Heart right ventricle (tissue), 16 donors: ENCODE measurements at regions of chr15 and their contacts with region 1.

Region 1: DNA sequence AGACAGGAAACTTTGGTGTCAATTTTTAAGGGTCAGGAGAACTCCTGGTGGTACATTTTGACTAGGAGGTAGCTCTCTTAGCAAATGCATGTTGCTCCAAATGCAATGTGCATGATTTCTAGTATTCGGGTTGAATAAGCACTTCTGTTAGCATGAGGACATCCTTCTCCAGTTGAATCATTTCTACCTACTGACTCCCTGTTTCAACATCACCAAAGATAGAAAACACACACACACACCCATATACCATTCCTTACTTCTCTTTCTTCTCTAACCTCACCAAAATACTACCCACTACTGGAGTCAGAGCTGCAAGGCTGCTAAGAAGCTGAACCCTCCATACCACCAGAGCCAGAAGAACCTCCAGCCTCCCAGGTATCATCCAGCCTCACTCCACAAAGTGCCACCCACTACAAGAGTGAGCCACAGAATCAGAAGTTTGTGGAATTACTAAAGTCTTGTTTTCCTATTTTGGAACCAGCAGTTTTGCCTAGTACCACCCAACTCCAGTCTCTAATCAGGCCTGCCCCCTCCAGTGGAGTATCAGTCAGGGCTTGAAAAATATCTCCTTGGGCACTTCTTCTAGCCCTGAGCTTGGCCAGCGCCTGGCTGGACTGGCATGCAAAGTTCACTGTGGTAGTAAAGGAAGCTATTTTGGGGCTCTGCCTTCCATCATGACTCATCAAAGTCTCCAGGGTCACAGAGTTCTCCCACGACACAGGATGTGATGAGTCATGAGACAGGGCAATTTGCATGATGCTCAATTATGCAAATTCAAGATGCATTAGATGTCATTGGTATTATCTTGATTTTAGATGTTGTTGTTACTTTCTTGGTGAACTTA is 110.2 kb downstream of the CYP19A1 start:
- DNase-seq: peak; percentile 16 to 22
- ATAC-seq: peak; percentile 51 to 93 (median 84)
- H3K4me3 ChIP-seq: no peak overlapping the region
- H3K27ac ChIP-seq: peak overlapping the region in 1 of 10 donors; percentile 62
- H3K4me1 ChIP-seq: peaks cover 0 to 52% (median 12%) of the 10 kb centered on the region in 9 donors
- H3K27me3 ChIP-seq: no peaks in the 10 kb centered on the region
- CTCF ChIP-seq: no peak

Region 2: GRCh38 chr15:51281368-51281967 is 53.3 kb after region 1 on chr15:
- intact Hi-C with region 1: loop called in 1 of 10 experiments (anchors 2 kb)
- DNase-seq: peak; percentile 63 to 64
- ATAC-seq: peak; percentile 84 to 95 (median 92)
- H3K4me3 ChIP-seq: no peak overlapping the region
- H3K27ac ChIP-seq: peak overlapping the region in 5 of 10 donors; percentile 6 to 42 (median 26)
- H3K4me1 ChIP-seq: peaks cover 0 to 26% (median 0%) of the 10 kb centered on the region in 9 donors
- H3K27me3 ChIP-seq: peaks cover 0 to 18% (median 7%) of the 10 kb centered on the region in 7 donors
- CTCF ChIP-seq: peak; percentile 63 to 83 (median 78)